ENCODE measurements at regions of chr1 and their contacts with region 1.

Region 1: GRCh38 chr1:184754476-184755225 is at the start of gene EDEM3:
- DNase-seq: peak; percentile 98
- ATAC-seq: peak; percentile 95
- H3K4me3 Mint-ChIP-seq: peak within 1 kb of the TSS; percentile 95
- H3K27ac Mint-ChIP-seq: peak within 1 kb of the TSS; percentile 93
- H3K4me1 Mint-ChIP-seq: peaks cover 44% of the 10 kb centered on the region
- H3K27me3 Mint-ChIP-seq: peaks cover 3% of the 10 kb centered on the region
- total RNA-seq, gene EDEM3: 14.0 to 15.2 TPM

Region 2: DNA sequence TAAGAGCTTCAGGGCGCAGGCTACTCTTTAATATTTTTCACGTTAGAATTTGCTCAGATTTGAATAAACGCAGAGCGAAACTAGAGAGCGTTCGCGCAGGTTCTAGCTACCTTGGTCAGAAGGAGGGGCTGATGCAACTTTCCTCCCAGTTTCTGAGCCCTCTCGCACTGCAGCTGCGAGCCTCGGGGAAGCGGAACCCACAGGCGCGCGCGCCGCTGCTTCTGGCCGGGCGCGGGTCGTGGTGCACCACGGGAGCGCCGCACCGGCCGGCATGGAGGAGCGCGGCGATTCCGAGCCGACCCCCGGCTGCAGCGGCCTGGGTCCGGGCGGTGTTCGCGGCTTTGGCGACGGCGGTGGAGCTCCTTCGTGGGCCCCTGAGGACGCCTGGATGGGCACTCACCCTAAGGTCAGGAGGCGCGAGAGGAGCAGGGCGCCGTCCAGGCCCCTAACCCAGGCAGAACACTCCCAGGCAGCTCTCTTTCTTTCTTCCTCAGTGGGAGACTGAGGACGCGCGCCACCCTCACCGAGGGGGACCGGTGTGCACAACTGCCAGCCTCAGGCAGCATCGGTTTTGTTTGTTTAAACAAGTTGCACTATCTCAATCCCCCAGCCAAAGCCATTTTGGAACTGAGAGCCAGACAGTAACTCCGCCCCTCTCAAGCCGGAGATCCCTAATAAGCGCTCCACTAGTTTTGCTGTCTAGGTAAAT is 703.0 kb before region 1 on chr1 and contains the start of gene TSEN15:
- CTCF ChIA-PET with region 1: no interaction called
- POLR2A ChIA-PET with region 1: no interaction called
- intact Hi-C with region 1: loop called in 1 of 2 experiments (anchors 5 kb)
- DNase-seq: peak; percentile 89
- ATAC-seq: peak; percentile 97
- H3K4me3 Mint-ChIP-seq: peak within 1 kb of the TSS; percentile 93
- H3K27ac Mint-ChIP-seq: peak within 1 kb of the TSS; percentile 99
- H3K4me1 Mint-ChIP-seq: peaks cover 33% of the 10 kb centered on the region
- H3K27me3 Mint-ChIP-seq: peaks cover 9% of the 10 kb centered on the region
- total RNA-seq, gene TSEN15: 44.1 to 47.3 TPM

Region 3: GRCh38 chr1:184866991-184867788 is 112.5 kb after region 1 on chr1:
- CTCF ChIA-PET with region 1: no interaction called
- POLR2A ChIA-PET with region 1: interaction called, 3 read pairs
- intact Hi-C with region 1: loop called in 1 of 2 experiments (anchors 5 kb)
- DNase-seq: peak; percentile 75
- ATAC-seq: peak; percentile 85
- H3K4me3 Mint-ChIP-seq: peak overlapping the region; percentile 32
- H3K27ac Mint-ChIP-seq: peak overlapping the region; percentile 90
- H3K4me1 Mint-ChIP-seq: peaks cover 46% of the 10 kb centered on the region
- H3K27me3 Mint-ChIP-seq: no peaks in the 10 kb centered on the region

Region 4: DNA sequence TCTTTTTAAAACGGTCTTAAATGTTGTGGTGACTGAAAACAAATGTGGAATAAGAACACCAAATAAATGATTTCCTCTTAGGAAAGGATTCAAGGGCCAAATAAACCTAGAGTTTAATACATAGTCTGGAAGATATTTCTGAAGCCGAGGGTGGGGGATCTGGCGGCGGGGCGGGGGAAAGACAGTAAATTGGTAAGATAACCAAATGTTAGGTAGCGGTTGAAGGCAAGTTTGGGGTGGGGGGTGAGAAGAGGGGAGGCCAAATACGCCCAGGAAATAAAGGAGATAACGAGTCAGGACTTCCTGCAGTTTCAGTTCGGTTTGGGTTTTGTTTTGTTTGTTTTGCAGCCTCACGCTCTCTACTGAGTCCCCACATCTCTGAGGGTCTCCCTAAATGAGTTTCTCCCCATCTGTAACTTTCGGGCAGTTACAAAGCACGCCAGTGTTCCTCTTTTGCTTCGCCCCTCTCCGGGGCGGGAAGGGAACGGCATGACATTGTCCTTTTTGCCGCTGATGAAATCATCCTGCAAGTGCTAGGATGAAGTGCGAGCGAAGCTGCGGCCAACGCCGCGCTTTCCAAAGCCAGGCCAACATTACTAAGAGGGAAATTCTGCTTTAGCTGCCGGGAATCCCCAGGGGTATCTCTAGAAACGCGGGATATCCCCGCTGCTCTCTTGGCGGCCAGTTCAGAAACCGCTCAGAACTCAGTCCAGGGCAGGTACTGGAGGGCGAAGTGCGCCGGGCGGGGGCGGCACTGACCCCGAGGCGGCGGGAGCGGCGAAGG is 218.8 kb after region 1 on chr1:
- CTCF ChIA-PET with region 1: no interaction called
- POLR2A ChIA-PET with region 1: interaction called, 3 read pairs
- intact Hi-C with region 1: loop called (anchors 1 kb)
- DNase-seq: peak; percentile 84
- ATAC-seq: peak; percentile 63
- H3K4me3 Mint-ChIP-seq: peak overlapping the region; percentile 86
- H3K27ac Mint-ChIP-seq: peak overlapping the region; percentile 97
- H3K4me1 Mint-ChIP-seq: peaks cover 45% of the 10 kb centered on the region
- H3K27me3 Mint-ChIP-seq: peaks cover 16% of the 10 kb centered on the region

Region 5: GRCh38 chr1:185156854-185157598 is 402.4 kb after region 1 on chr1 and contains the starts of genes SWT1 and TRMT1L:
- CTCF ChIA-PET with region 1: interaction called, 3 read pairs
- POLR2A ChIA-PET with region 1: interaction called, 3 read pairs
- intact Hi-C with region 1: loop called (anchors 1 kb)
- DNase-seq: peak; percentile 99
- ATAC-seq: peak; percentile 94
- H3K4me3 Mint-ChIP-seq: peak within 1 kb of the TSS; percentile 91
- H3K27ac Mint-ChIP-seq: peak within 1 kb of the TSS; percentile 95
- H3K4me1 Mint-ChIP-seq: peaks cover 50% of the 10 kb centered on the region
- H3K27me3 Mint-ChIP-seq: no peaks in the 10 kb centered on the region
- total RNA-seq, gene SWT1: 3.0 to 3.3 TPM
- total RNA-seq, gene TRMT1L: 33.7 to 38.7 TPM

Region 6: GRCh38 chr1:186304982-186305949 is 1550.6 kb after region 1 on chr1:
- CTCF ChIA-PET with region 1: no interaction called
- POLR2A ChIA-PET with region 1: interaction called, 3 read pairs
- intact Hi-C with region 1: loop called in 1 of 2 experiments (anchors 10 kb)
- DNase-seq: peak; percentile 22
- ATAC-seq: no peak
- H3K4me3 Mint-ChIP-seq: no peak overlapping the region
- H3K27ac Mint-ChIP-seq: peak overlapping the region; percentile 76
- H3K4me1 Mint-ChIP-seq: peaks cover 57% of the 10 kb centered on the region
- H3K27me3 Mint-ChIP-seq: no peaks in the 10 kb centered on the region